Kidney (tissue), 22 donors: ENCODE measurements at regions of chr10 and their contacts with region 1.

Region 1: DNA sequence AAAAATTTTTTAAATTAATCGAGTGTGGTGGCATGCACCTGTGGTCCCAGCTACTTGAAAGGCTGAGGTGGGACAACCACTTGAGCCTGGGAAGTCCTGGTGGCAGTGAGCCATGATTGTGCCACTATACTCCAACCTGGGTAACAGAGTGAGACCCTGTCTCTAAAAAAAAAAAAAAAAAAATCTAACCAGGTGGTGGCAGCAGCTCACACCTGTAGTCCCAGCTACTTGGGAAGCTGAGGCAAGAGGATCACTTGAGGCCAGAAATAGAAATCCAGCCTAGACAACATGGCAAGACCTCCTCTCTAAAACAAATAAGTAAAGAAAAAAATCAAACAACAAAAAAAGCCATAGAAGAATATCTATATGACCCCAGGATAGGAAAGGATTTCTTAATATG is 3.6 kb upstream of the MYOF start:
- DNase-seq: no peak
- H3K4me3 ChIP-seq: no peak overlapping the region
- H3K27ac ChIP-seq: no peak overlapping the region
- H3K4me1 ChIP-seq: no peaks in the 10 kb centered on the region
- H3K27me3 ChIP-seq: no peaks in the 10 kb centered on the region
- CTCF ChIP-seq: no peak

Region 2: GRCh38 chr10:93376372-93377293 is 109.1 kb before region 1 on chr10:
- intact Hi-C with region 1: loop called (anchors 5 kb)
- DNase-seq: peak; percentile 58 to 92 (median 78)
- H3K4me3 ChIP-seq: no peak overlapping the region
- H3K27ac ChIP-seq: no peak overlapping the region
- H3K4me1 ChIP-seq: no peaks in the 10 kb centered on the region
- H3K27me3 ChIP-seq: no peaks in the 10 kb centered on the region
- CTCF ChIP-seq: peak; percentile 96